K562 (cell line): ENCODE measurements at regions of chr6 and their contacts with region 1.

Region 1: GRCh38 chr6:26216356-26216885 is 129.2 kb downstream of the HFE start:
- DNase-seq: peak; percentile 83 to 98 (median 90)
- ATAC-seq: peak; percentile 69
- H3K4me3 ChIP-seq: peak overlapping the region; percentile 61
- H3K27ac ChIP-seq: peak overlapping the region; percentile 91
- H3K4me1 ChIP-seq: peaks cover 15 to 23% of the 10 kb centered on the region in 2 experiments
- H3K27me3 ChIP-seq: no peaks in the 10 kb centered on the region
- CTCF ChIP-seq: no peak; a peak in 1 of 6 replicates
- EP300 ChIP-seq: no peak
- POLR2A ChIP-seq: peak; percentile 100
- RAD21 ChIP-seq: no peak; a peak in 1 of 4 replicates

Region 2: GRCh38 chr6:26012061-26012460 is 204.4 kb before region 1 on chr6:
- CTCF ChIA-PET with region 1: no interaction called
- POLR2A ChIA-PET with region 1: no interaction called
- in situ Hi-C with region 1: no loop called
- intact Hi-C with region 1: no loop called
- DNase-seq: no peak
- ATAC-seq: peak; percentile 48; the same call in 2 of the 3 replicates
- H3K4me3 ChIP-seq: no peak overlapping the region
- H3K27ac ChIP-seq: no peak overlapping the region
- H3K4me1 ChIP-seq: peaks cover 3 to 10% of the 10 kb centered on the region in 2 experiments
- H3K27me3 ChIP-seq: no peaks in the 10 kb centered on the region
- CTCF ChIP-seq: no peak
- EP300 ChIP-seq: no peak
- POLR2A ChIP-seq: no peak
- RAD21 ChIP-seq: no peak

Region 3: DNA sequence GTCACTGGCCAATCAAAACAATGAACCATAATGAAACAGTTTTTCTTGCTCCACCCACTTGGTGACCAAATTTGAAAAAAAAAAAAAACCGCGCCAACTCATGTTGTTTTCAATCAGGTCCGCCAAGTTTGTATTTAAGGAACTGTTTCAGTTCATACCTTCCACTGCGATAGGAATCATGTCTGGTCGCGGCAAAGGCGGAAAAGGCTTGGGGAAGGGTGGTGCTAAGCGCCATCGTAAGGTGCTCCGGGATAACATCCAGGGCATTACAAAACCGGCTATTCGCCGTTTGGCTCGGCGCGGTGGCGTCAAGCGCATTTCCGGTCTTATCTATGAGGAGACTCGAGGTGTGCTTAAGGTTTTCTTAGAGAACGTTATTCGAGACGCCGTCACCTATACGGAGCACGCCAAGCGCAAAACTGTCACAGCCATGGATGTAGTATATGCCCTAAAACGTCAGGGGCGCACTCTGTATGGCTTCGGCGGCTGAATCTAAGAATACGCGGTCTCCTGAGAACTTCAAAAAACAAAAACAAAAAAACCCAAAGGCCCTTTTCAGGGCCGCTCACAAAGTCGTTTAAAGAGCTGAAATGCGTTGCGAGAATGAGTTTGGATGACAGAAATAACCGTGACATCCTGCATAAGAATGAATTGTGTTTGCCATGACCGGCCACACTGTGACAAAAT is 112.5 kb before region 1 on chr6:
- CTCF ChIA-PET with region 1: no interaction called
- POLR2A ChIA-PET with region 1: interaction called, 22 read pairs
- in situ Hi-C with region 1: no loop called
- intact Hi-C with region 1: loop called (anchors 1 kb)
- DNase-seq: peak; percentile 78 to 98 (median 86)
- ATAC-seq: peak; percentile 91
- H3K4me3 ChIP-seq: peak overlapping the region; percentile 30
- H3K27ac ChIP-seq: peak overlapping the region; percentile 92
- H3K4me1 ChIP-seq: peaks cover 3 to 20% of the 10 kb centered on the region in 2 experiments; a peak in 3 of 5 replicates
- H3K27me3 ChIP-seq: no peaks in the 10 kb centered on the region
- CTCF ChIP-seq: peak; percentile 53 to 71 (median 61)
- EP300 ChIP-seq: peak; percentile 96
- POLR2A ChIP-seq: peak; percentile 100
- RAD21 ChIP-seq: peak; percentile 29 to 46; a peak in 3 of 4 replicates

Region 4: GRCh38 chr6:26196846-26197648 is 19.4 kb before region 1 on chr6:
- CTCF ChIA-PET with region 1: interaction called, 5 read pairs
- POLR2A ChIA-PET with region 1: interaction called, 1,095 read pairs
- in situ Hi-C with region 1: no loop called
- intact Hi-C with region 1: loop called (anchors 1 kb)
- DNase-seq: peak; percentile 89 to 93 (median 90)
- ATAC-seq: peak; percentile 53
- H3K4me3 ChIP-seq: peak overlapping the region; percentile 86
- H3K27ac ChIP-seq: peak overlapping the region; percentile 99
- H3K4me1 ChIP-seq: peaks cover 7 to 13% of the 10 kb centered on the region in 2 experiments
- H3K27me3 ChIP-seq: no peaks in the 10 kb centered on the region
- CTCF ChIP-seq: 0 out of 6 replicates have a peak, but pooled peaks of 1 of the 3 experiments have one; percentile 19
- EP300 ChIP-seq: peak; percentile 43
- POLR2A ChIP-seq: peak; percentile 97
- RAD21 ChIP-seq: 0 out of 4 replicates have a peak, but pooled peaks of 1 of the 2 experiments have one; percentile 8

Region 5: DNA sequence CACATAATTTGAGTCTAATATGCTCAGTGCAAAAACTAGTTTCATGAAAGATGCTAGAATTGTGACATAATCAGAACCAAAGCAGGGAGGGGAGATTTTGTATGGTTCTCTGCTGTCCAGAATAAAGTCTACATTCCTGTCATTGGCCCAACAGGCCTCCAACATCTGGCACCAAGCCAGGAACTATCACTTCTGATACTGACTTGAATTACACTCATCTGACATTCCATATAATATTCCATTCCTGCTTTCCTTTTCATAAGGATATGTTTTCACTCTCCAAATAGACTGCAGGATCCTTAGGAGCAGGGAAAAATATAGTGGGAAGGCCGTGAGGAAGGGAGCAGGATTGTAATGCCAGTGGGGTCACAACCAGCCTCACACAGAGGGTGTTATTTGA is 64.0 kb after region 1 on chr6:
- CTCF ChIA-PET with region 1: no interaction called
- POLR2A ChIA-PET with region 1: interaction called, 194 read pairs
- in situ Hi-C with region 1: no loop called
- intact Hi-C with region 1: loop called (anchors 1 kb)
- DNase-seq: peak in 1 of 4 experiments; percentile 48
- ATAC-seq: no peak
- H3K4me3 ChIP-seq: no peak overlapping the region
- H3K27ac ChIP-seq: no peak overlapping the region
- H3K4me1 ChIP-seq: peaks cover 11 to 13% of the 10 kb centered on the region in 2 experiments; a peak in 4 of 5 replicates
- H3K27me3 ChIP-seq: no peaks in the 10 kb centered on the region
- CTCF ChIP-seq: no peak
- EP300 ChIP-seq: no peak
- POLR2A ChIP-seq: peak; percentile 51; the same call in 1 of the 2 replicates
- RAD21 ChIP-seq: peak in 1 of 2 experiments; percentile 10; a peak in 1 of 4 replicates

Region 6: DNA sequence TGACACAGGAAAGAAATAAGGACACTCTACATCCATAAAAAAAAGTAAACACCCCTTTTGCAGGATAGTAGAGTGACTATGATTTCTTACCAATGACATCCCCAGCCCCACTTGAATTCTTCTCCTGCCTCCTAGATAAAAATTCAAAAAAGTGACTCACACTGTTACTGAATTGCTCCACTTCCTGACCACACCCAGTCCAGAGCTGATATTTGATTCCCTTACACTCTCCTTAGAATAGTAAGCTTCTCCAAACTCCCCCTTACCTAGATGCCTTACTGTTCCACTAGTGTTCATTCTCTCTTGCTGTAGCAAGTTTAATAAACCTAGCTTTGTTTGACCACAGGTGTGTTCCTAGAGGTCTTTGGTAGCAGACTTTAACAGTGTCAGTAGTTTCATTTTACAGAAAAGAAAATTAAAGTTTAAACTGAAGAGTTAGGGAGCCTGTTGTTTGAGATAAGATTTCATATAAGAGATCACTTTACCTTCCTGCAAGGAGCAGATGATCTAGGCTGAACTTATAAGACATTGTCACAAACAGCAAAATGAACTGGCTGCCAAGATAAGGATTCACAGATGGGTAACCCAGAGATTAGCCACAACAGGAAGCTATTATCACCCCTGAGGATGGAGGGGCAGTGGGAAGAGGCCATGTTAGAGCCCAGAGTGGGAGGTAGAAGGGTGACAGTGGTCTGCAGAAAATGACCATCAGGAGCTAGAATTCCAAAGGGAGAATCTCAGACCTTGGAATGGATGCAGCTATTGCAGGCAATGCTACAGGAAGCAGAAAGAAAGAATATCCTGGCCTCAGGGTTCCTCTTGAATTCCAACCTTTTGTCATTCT is 120.2 kb after region 1 on chr6:
- CTCF ChIA-PET with region 1: interaction called, 4 read pairs
- POLR2A ChIA-PET with region 1: interaction called, 197 read pairs
- in situ Hi-C with region 1: no loop called
- intact Hi-C with region 1: no loop called
- DNase-seq: peak; percentile 81 to 92 (median 86)
- ATAC-seq: peak; percentile 86
- H3K4me3 ChIP-seq: no peak overlapping the region
- H3K27ac ChIP-seq: peak overlapping the region; percentile 81
- H3K4me1 ChIP-seq: peaks cover 26 to 73% of the 10 kb centered on the region in 2 experiments
- H3K27me3 ChIP-seq: no peaks in the 10 kb centered on the region
- CTCF ChIP-seq: no peak
- EP300 ChIP-seq: peak; percentile 97
- POLR2A ChIP-seq: no peak
- RAD21 ChIP-seq: no peak

Region 7: DNA sequence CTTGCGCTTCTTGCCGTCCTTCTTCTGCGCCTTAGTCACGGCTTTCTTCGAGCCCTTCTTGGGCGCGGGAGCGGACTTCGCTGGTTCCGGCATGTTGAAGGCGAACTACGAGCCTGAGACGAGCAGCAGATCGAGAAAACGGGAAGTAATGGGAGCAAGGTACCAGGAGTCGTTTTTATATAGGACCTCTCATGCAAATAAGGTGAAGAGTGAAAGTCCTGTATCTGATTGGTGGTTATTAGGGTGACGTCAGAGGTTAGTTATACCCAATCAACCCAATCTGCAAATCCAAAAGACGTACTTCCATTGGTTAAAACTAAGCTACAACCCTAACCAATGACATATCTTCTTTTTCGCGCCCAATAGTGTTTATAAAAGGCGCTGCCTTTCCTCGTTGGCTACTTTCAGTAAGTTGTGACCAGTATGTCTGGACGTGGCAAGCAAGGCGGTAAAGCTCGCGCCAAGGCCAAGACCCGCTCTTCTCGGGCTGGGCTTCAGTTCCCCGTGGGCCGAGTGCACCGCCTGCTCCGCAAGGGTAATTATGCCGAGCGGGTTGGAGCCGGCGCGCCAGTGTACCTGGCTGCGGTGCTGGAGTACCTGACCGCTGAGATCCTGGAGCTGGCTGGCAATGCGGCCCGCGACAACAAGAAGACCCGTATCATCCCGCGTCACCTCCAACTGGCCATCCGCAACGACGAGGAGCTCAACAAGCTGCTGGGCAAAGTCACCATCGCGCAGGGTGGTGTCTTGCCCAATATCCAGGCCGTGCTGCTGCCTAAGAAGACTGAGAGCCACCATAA is 930.5 kb after region 1 on chr6:
- CTCF ChIA-PET with region 1: no interaction called
- POLR2A ChIA-PET with region 1: interaction called, 50 read pairs
- in situ Hi-C with region 1: no loop called
- intact Hi-C with region 1: loop called (anchors 1 kb)
- DNase-seq: peak; percentile 93 to 99 (median 98)
- ATAC-seq: peak; percentile 68
- H3K4me3 ChIP-seq: peak overlapping the region; percentile 71
- H3K27ac ChIP-seq: peak overlapping the region; percentile 94
- H3K4me1 ChIP-seq: peaks cover 4 to 13% of the 10 kb centered on the region in 2 experiments
- H3K27me3 ChIP-seq: no peaks in the 10 kb centered on the region
- CTCF ChIP-seq: no peak
- EP300 ChIP-seq: no peak; the same call in 1 of the 2 replicates
- POLR2A ChIP-seq: peak; percentile 100
- RAD21 ChIP-seq: no peak; a peak in 1 of 4 replicates